ENCODE measurements at regions of chrX and their contacts with region 1.

Region 1: DNA sequence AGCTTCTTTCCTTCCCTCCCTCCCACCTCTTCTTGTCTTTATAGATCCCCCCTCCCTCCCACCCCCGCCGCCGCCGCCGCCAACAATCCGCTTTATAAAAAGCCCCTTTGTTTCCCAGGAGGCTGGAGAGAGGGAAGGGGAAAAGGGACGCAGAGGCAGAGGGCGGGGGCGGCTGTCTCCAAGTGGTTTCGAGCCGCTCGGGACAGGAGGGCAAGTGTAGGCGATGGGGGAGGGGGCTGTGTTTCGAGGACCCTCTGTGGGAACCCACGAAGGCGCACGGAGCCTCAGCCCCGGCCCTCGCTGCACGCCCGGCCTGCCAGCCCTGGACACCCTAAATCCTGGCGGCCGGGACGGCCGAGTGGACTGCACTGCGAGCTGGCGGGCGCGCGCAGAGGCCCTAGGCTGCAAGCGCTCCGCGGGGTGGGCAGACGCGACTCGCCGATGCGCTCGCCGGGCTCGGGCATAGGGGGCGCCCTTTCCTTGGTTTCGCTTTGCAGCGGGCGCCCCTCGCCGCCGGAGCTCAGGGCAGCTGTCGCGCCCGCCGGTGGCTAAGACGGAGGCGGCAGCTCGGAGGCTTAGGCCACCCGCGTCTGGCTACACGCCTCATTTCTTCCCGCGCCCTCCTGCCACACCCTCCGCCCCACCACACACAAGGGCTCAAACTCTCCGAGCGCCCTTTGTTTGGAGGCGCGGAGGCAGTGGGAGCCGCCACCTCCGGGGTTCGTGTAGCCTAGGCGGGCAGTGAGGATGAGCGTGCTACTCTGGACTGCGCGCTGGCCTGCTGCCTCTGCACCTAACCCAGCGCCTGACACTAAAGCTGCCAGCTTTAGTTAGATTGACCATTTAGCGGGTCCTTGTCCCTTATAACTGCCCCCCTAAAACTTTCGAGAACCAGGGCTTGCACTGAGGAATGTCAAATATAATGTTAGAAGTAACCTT is 2.2 kb downstream of the MAMLD1 start:
- DNase-seq: peak; percentile 57
- ATAC-seq: peak; percentile 16
- H3K4me3 ChIP-seq: peak overlapping the region; percentile 91
- H3K27ac ChIP-seq: peak overlapping the region; percentile 52
- H3K4me1 ChIP-seq: peaks cover 25% of the 10 kb centered on the region
- H3K27me3 ChIP-seq: no peaks in the 10 kb centered on the region
- CTCF ChIP-seq: peak; percentile 61

Region 2: GRCh38 chrX:150062292-150063137 is 302.8 kb before region 1 on chrX:
- CTCF ChIA-PET with region 1: no interaction called
- POLR2A ChIA-PET with region 1: no interaction called
- intact Hi-C with region 1: loop called (anchors 2 kb)
- DNase-seq: peak; percentile 78
- ATAC-seq: peak; percentile 89
- H3K4me3 ChIP-seq: no peak overlapping the region; the same call in 1 of the 2 replicates
- H3K27ac ChIP-seq: peak overlapping the region; percentile 67
- H3K4me1 ChIP-seq: peaks cover 35% of the 10 kb centered on the region
- H3K27me3 ChIP-seq: no peaks in the 10 kb centered on the region
- CTCF ChIP-seq: no peak

Region 3: GRCh38 chrX:150184487-150184886 is 180.8 kb before region 1 on chrX:
- CTCF ChIA-PET with region 1: no interaction called
- POLR2A ChIA-PET with region 1: no interaction called
- intact Hi-C with region 1: loop called (anchors 5 kb)
- DNase-seq: peak; percentile 92
- ATAC-seq: peak; percentile 96
- H3K4me3 ChIP-seq: no peak overlapping the region
- H3K27ac ChIP-seq: peak overlapping the region; percentile 82
- H3K4me1 ChIP-seq: peaks cover 17% of the 10 kb centered on the region
- H3K27me3 ChIP-seq: no peaks in the 10 kb centered on the region
- CTCF ChIP-seq: no peak

Region 4: GRCh38 chrX:150291014-150291413 is 74.3 kb before region 1 on chrX:
- CTCF ChIA-PET with region 1: no interaction called
- POLR2A ChIA-PET with region 1: interaction called, 11 read pairs
- intact Hi-C with region 1: loop called (anchors 5 kb)
- DNase-seq: peak; percentile 69
- ATAC-seq: peak; percentile 19; the same call in 1 of the 2 replicates
- H3K4me3 ChIP-seq: no peak overlapping the region
- H3K27ac ChIP-seq: no peak overlapping the region
- H3K4me1 ChIP-seq: peaks cover 19% of the 10 kb centered on the region
- H3K27me3 ChIP-seq: no peaks in the 10 kb centered on the region
- CTCF ChIP-seq: no peak

Region 5: DNA sequence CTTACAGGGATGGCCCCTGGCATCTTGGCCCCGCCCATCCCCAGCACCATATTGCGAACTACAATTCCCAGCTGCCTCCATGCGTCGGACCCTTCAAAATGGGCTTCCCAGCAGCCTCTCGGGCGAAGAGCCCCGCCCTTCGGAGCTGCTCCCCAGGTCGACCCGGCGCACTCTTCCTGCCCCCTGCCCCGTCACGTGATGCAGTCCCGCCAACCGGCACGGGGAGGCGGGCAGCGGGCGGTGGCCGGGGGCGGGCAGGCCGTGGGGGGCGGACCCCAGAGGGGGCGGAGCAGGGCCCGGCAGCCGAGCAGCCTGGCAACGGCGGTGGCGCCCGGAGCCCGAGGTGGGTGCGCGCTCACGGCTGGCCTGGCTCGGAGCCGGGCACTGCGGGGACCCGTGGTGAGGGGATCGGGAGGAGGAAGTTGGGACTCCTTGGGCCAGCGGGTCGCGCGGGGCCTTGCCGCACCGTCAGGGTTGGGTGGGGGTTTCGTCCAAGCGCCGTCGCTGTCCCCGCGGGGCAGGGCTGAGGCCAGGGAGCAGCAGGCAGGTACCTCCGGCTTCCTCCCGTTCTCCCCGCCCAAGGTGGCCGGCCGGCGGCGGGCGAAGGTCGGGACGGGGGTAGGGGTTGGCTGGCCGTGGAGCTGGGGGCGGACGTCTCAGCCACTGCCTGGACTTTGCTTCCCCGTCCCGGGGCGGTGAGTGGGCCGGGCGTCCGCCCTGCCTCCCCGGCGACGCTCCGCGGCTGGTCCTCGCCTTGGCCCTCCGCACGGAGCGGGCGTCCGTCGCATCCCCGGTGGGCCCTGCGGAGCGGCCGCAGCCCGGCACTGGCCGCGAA is 203.2 kb after region 1 on chrX and contains the start of gene MTM1:
- CTCF ChIA-PET with region 1: no interaction called
- POLR2A ChIA-PET with region 1: no interaction called
- intact Hi-C with region 1: loop called (anchors 5 kb)
- DNase-seq: peak; percentile 96
- ATAC-seq: peak; percentile 85
- H3K4me3 ChIP-seq: peak within 1 kb of the TSS; percentile 83
- H3K27ac ChIP-seq: peak within 1 kb of the TSS; percentile 11; the same call in 1 of the 2 replicates
- H3K4me1 ChIP-seq: peaks cover 42% of the 10 kb centered on the region
- H3K27me3 ChIP-seq: no peaks in the 10 kb centered on the region
- CTCF ChIP-seq: no peak
- total RNA-seq, gene MTM1: 5.5 and 13.7 TPM in 2 replicates